ENCODE measurements at regions of chr16 and their contacts with region 1.

Region 1: DNA sequence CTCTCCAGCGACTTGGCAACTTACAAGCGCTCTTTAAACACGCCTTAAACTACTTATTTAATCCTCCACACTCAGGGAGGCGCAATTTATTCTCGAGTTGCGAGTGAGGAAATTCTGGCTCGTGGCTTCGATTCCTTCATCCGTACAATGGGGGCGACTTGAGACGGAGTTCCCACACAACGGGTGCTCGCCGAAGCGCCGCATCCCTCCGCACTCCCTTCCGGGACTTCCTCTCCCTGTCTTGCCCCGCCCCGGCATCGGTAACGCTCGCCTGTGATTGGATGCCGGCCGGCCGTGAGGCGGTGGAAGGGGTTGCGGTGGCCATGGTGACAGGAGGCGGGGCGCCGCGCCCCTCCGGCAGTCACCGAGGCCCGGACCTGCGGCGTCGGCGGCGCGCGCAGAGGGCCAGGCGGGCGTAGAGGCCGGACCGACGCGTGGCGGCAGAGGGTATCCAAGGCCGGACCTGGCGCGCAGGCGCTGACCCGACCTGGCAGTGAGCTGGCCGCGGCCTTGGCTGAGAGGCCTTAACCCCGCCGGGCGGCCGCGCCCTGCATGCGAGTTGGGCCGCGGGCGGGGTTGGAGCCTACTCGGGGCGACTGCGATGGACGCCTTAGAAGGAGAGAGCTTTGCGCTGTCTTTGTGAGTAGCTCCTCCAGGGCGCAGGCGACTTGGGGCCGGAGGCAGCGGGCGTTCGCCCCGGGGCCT is at the start of gene ARL2BP:
- DNase-seq: peak; percentile 98
- H3K4me3 Mint-ChIP-seq: peak within 1 kb of the TSS; percentile 93
- H3K27ac Mint-ChIP-seq: peak within 1 kb of the TSS; percentile 91
- H3K4me1 Mint-ChIP-seq: peaks cover 16% of the 10 kb centered on the region
- H3K27me3 Mint-ChIP-seq: no peaks in the 10 kb centered on the region
- total RNA-seq, gene ARL2BP: 11.0 to 11.2 TPM

Region 2: DNA sequence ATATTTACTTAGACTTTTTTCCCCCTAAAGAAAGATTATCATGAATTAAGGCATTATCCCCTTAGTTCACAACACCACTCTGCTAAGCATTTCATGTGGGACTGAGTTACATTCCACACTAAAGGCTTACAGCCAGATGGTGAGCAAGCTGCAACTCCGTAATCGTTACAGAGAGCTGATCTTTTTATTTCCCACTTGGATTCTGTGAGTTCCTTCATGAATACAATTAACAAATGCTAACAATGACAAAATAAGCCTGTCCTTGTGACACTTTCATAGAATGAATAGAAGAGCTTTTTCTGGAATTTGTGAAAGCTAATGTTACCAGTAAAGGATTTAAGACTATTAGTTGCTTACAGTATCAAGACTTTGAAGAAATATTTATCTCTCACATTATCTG is 784.8 kb before region 1 on chr16:
- CTCF ChIA-PET with region 1: no interaction called
- intact Hi-C with region 1: no loop called
- DNase-seq: no peak
- H3K4me3 Mint-ChIP-seq: no peak overlapping the region
- H3K27ac Mint-ChIP-seq: no peak overlapping the region
- H3K4me1 Mint-ChIP-seq: peaks cover 3% of the 10 kb centered on the region
- H3K27me3 Mint-ChIP-seq: no peaks in the 10 kb centered on the region

Region 3: DNA sequence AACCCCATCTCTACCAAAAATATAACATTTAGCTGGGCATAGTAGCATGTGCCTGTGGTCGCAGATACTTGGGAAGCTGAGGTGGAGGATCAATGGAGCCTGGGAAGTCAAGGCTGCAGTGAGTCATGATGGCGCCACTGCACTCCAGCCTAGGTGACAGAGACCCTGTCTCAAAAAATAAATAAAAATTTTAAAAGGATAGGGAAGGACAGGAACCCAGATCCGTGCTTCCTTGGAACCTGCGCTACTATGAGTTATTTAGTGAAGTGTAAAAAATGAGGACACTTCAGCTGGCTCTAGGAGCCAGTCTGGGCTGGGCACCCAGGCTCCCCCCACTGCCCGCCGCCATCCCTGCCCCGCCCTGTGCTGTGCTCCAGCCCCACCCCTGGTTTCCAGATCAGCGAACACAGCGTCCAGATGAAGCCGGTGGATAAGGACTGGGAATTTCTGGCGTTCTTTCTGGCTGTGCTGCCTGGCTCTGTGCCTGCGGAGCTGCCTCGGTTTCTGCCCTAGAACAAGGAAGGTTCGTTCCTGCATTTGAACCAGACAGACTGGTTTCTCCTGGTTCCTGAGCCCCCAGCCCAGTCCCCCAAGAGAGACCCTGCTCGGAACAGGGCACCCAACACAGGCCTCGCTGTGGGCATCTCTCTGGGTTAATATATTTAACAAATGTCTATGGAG is 21.1 kb after region 1 on chr16:
- CTCF ChIA-PET with region 1: no interaction called
- intact Hi-C with region 1: loop called (anchors 1 kb)
- DNase-seq: no peak
- H3K4me3 Mint-ChIP-seq: no peak overlapping the region
- H3K27ac Mint-ChIP-seq: peak overlapping the region; percentile 73
- H3K4me1 Mint-ChIP-seq: peaks cover 49% of the 10 kb centered on the region
- H3K27me3 Mint-ChIP-seq: no peaks in the 10 kb centered on the region

Region 4: GRCh38 chr16:57284208-57284951 is 39.5 kb after region 1 on chr16 and contains the start of gene PLLP:
- CTCF ChIA-PET with region 1: no interaction called
- intact Hi-C with region 1: loop called (anchors 2 kb)
- DNase-seq: peak; percentile 35
- H3K4me3 Mint-ChIP-seq: peak within 1 kb of the TSS; percentile 79
- H3K27ac Mint-ChIP-seq: peak within 1 kb of the TSS; percentile 24
- H3K4me1 Mint-ChIP-seq: peaks cover 25% of the 10 kb centered on the region
- H3K27me3 Mint-ChIP-seq: no peaks in the 10 kb centered on the region
- total RNA-seq, gene PLLP: 0.25 to 0.41 TPM

Region 5: GRCh38 chr16:57447186-57447962 is 202.5 kb after region 1 on chr16 and contains the starts of genes CIAPIN1 and COQ9:
- CTCF ChIA-PET with region 1: no interaction called
- intact Hi-C with region 1: loop called (anchors 1 kb)
- DNase-seq: peak; percentile 96
- H3K4me3 Mint-ChIP-seq: peak within 1 kb of the TSS; percentile 86
- H3K27ac Mint-ChIP-seq: peak within 1 kb of the TSS; percentile 86
- H3K4me1 Mint-ChIP-seq: peaks cover 42% of the 10 kb centered on the region
- H3K27me3 Mint-ChIP-seq: no peaks in the 10 kb centered on the region
- total RNA-seq, gene CIAPIN1: 29.5 to 31.0 TPM
- total RNA-seq, gene COQ9: 30.6 TPM